Activated B cell treated with CpG ODN at 0.5 μM for 24 hours (primary cell): ENCODE measurements at regions of chr13 and their contacts with region 1.

Region 1: DNA sequence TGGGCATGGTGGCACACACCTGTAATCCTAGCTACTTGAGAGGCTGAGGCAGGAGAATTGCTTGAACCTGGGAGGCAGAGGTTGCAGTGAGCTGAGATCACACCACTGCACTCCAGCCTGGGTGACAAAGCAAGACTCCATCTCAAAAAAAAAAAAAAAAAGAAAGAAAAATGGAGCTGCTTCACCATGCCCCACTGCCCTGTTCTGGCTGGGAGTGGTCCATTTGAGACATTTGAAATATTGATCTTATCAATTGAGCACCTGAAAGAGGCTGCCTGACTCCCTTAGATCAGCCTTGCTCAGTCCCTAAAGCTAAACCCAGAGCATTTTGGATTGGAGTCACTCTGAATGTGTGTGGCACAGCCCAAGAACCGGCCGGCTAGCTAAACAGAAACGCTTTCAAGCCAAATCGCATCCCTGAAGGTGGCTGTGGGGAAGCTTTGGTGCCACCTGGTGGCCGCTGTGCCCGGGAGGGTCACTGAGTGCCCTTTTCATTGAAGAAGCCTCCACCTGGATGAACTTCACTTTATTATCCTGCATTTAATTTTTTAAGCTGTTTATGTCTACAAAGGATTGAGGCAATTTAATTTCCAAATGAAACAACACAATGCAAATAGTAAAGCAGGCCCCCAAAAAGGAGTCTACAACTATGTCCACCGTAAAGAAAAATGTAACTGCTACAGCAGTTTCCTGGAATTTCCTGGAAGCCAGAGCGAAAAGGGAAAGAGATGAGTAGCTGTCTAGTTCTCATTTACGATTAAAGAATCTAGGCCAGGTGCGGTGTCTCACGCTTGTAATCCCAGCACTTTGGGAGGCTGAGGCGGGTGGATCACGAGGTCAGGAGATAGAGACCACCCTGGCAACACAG is 53.1 kb upstream of the SERPINE3 start:
- DNase-seq: peak; percentile 65
- ATAC-seq: peak; percentile 71
- H3K4me3 Mint-ChIP-seq: no peak overlapping the region
- H3K27ac Mint-ChIP-seq: no peak overlapping the region
- H3K4me1 Mint-ChIP-seq: peaks cover 2% of the 10 kb centered on the region
- H3K27me3 Mint-ChIP-seq: peaks cover 4% of the 10 kb centered on the region
- CTCF ChIP-seq: peak; percentile 67

Region 2: GRCh38 chr13:51125498-51126226 is 160.7 kb before region 1 on chr13:
- CTCF ChIA-PET with region 1: interaction called, 133 read pairs
- POLR2A ChIA-PET with region 1: no interaction called
- intact Hi-C with region 1: loop called (anchors 1 kb)
- DNase-seq: no peak
- ATAC-seq: peak; percentile 75
- H3K4me3 Mint-ChIP-seq: no peak overlapping the region
- H3K27ac Mint-ChIP-seq: no peak overlapping the region
- H3K4me1 Mint-ChIP-seq: peaks cover 3% of the 10 kb centered on the region
- H3K27me3 Mint-ChIP-seq: peaks cover 15% of the 10 kb centered on the region
- CTCF ChIP-seq: no peak

Region 3: DNA sequence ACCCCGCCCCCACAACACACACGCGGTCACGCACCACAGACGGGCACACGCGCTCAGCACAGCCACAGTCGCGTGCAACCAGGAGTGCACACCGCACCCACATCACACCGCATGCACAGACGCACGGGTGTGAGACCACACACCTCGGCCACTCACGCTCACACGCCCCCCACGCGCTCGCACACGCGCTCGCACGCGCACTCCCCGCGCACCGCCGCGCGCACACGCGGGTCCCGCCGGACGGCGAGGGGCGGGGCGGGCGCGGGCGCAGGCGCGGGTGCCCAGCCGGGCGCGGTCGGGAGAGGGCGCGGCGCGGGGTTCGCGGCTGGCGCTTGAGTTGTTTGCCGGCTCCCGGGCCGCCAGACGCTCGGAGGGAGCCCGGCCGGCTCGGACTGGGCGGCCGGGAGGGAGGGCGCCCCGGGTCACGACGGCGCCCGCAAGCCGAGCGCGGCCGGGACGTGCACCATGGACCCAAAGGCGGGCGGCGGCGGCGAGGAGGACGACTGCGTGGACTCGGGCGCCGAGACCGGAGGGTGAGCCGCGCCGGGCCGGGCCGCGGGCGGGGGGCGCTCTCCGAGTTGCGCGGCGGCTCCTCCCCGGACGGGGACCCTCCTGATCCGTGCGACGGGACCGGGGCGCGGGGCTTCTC is 64.2 kb before region 1 on chr13 and contains the start of gene FAM124A:
- CTCF ChIA-PET with region 1: interaction called, 4 read pairs
- POLR2A ChIA-PET with region 1: no interaction called
- intact Hi-C with region 1: loop called (anchors 1 kb)
- DNase-seq: peak; percentile 51
- ATAC-seq: peak; percentile 90
- H3K4me3 Mint-ChIP-seq: peak within 1 kb of the TSS; percentile 81
- H3K27ac Mint-ChIP-seq: no peak within 1 kb of the TSS
- H3K4me1 Mint-ChIP-seq: peaks cover 7% of the 10 kb centered on the region
- H3K27me3 Mint-ChIP-seq: peaks cover 49% of the 10 kb centered on the region
- CTCF ChIP-seq: no peak
- total RNA-seq, gene FAM124A: 0.07 TPM in 1 of 2 replicates, not detected in the other

Region 4: GRCh38 chr13:51297556-51297955 is 11.2 kb after region 1 on chr13:
- CTCF ChIA-PET with region 1: interaction called, 12 read pairs
- POLR2A ChIA-PET with region 1: no interaction called
- intact Hi-C with region 1: no loop called
- DNase-seq: no peak
- ATAC-seq: no peak
- H3K4me3 Mint-ChIP-seq: no peak overlapping the region
- H3K27ac Mint-ChIP-seq: no peak overlapping the region
- H3K4me1 Mint-ChIP-seq: no peaks in the 10 kb centered on the region
- H3K27me3 Mint-ChIP-seq: peaks cover 2% of the 10 kb centered on the region
- CTCF ChIP-seq: no peak